Ascending aorta (tissue), 2 donors: ENCODE measurements at regions of chr6 and their contacts with region 1.

Region 1: DNA sequence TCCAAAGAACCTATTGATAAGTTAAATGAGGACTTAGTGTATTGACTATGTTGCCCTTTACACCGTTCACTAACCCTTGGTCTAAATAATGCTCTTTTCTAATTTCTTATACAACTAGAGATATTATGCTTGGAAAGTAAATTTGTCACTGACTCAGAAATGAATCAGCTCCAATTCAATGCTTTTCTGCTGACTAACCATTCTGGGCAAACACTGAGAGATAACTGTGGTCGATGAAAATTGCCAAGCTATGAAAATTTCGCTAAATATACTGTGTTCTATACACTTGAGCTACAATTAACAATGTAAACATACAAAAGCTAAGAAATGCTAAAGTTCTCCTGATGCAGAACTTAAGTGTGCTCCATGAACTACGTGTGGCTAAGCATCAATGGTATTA is 23.1 kb upstream of the FBXO9 start:
- DNase-seq: no peak
- H3K4me3 ChIP-seq: no peak overlapping the region
- H3K27ac ChIP-seq: peak overlapping the region; percentile 4 to 77
- H3K4me1 ChIP-seq: peaks cover 5 to 23% of the 10 kb centered on the region in 2 donors
- H3K27me3 ChIP-seq: no peaks in the 10 kb centered on the region
- CTCF ChIP-seq: no peak

Region 2: GRCh38 chr6:53014063-53014462 is 28.0 kb before region 1 on chr6:
- intact Hi-C with region 1: loop called (anchors 2 kb)
- DNase-seq: no peak
- H3K4me3 ChIP-seq: no peak overlapping the region
- H3K27ac ChIP-seq: peak overlapping the region; percentile 78 to 82
- H3K4me1 ChIP-seq: peaks cover 0 to 17% of the 10 kb centered on the region in 2 donors
- H3K27me3 ChIP-seq: no peaks in the 10 kb centered on the region
- CTCF ChIP-seq: no peak